AG04449 (cell line): ENCODE measurements at regions of chr15 and their contacts with region 1.

Region 1: GRCh38 chr15:40893733-40894688 is at the start of gene VPS18:
- DNase-seq: peak; percentile 71
- H3K4me3 ChIP-seq: peak within 1 kb of the TSS; percentile 95
- CTCF ChIP-seq: peak; percentile 90

Region 2: DNA sequence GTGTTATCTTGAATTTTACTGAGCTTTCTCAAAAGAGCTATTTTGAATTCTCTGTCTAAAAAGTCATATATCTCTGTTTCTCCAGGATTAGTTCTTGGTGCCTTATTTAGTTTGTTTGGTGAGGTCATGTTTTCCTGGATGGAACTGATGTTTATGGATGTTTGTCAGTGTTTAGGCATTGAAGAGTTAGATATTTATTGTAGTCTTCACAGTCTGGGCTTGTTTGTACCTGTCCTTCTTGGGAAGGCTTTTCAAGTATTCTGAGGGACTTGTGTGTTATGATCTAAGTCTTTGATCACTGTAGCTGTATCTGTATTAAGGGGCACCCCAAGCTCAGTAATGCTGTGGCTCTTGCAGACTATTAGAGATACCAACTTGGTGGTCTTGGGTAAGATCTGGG is 209.6 kb before region 1 on chr15:
- CTCF ChIA-PET with region 1: interaction called, 14 read pairs
- POLR2A ChIA-PET with region 1: no interaction called
- DNase-seq: no peak
- H3K4me3 ChIP-seq: no peak overlapping the region
- CTCF ChIP-seq: no peak

Region 3: DNA sequence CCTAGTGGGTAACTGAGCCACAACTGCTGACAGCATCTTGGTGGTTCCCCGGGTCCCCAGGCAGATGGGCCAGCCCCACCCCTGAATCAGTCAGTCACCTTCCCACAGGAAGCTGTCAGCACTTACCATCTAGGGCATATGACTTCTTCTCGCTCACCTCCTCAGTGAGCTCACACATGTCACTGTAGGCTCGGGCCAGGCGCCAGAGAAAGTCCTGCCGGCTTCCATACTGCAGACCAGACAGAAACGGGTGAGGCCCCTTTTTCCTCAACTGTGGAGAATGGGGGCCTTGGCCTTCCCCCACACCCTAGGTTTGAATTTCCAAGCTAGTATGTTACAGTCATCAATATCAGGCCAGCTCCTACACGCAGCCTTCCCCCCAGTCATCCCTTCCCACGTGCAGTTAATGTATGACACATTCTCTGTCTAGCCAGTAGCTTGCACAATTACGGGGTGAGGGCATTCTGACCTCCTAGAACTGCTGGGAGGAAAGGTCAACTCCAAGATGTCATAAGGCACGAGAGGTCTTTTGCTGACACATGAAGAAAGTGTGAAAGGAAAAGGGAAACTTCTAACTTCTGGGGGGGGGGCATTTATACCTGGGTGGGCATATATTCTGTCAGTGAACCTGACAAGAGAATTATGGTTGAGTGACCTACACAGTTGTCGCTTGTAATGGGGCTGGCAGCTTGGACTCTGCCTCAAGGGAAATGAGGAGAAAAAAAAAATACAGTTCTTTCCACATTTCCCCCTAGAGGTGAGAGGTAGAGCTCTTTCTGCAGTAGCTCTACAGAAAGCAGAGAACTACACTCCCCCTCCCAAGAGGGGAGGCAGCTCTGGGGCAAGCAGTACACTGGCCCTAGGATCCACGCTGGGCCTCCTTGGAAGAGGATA is 149.8 kb before region 1 on chr15:
- CTCF ChIA-PET with region 1: interaction called, 37 read pairs
- POLR2A ChIA-PET with region 1: no interaction called
- DNase-seq: no peak
- H3K4me3 ChIP-seq: no peak overlapping the region
- CTCF ChIP-seq: no peak

Region 4: DNA sequence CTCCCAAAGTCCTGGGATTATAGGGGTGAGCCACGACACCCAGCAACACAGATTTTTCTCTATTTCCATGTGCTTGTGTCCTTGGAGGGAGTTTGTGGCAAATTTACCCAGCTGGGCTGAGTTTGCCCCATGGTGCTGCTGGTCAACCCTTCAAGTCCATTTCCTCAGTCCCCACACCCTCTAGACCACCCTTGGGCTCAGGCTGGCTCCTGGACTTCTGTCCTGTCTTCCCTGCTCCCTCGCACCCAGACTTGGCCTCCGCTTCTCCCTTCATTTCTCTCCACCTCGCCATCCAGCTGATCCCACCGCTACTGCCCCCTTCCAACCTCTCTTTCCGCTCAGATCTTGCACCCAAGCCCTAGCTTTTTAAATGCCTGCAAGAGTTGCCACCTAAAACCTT is 12.7 kb before region 1 on chr15:
- CTCF ChIA-PET with region 1: interaction called, 42 read pairs
- POLR2A ChIA-PET with region 1: interaction called, 3 read pairs
- DNase-seq: no peak
- H3K4me3 ChIP-seq: no peak overlapping the region
- CTCF ChIP-seq: no peak

Region 5: DNA sequence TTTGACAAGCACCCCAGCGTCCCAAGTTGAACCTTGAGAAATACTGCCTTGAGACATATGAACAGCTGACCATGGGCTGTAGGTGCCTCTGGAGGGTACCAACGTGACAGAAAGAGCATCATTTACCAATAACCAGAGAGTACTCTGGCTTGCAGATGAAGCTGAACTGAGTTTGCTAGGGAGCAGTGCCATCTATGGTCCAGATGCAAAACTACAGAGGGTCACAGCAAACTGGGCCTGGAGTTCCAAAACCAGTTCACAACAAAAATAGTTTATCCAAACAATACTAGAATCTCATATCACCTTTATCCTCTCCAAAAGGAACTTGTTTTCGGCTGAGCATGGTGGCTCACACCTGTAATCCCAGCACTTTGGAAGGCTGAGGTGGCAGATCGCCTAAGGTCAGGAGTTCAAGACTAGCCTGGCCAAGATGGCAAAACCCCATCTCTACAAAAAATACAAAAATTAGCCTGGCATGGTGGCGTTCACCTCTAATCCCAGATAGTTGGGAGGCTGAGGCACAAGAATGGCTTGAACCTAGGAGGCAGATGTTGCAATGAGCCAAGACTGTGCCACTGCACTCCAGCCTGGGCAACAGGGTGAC is 128.6 kb after region 1 on chr15:
- CTCF ChIA-PET with region 1: interaction called, 498 read pairs
- POLR2A ChIA-PET with region 1: interaction called, 3 read pairs
- DNase-seq: peak; percentile 16
- H3K4me3 ChIP-seq: no peak overlapping the region
- CTCF ChIP-seq: peak; percentile 77

Region 6: DNA sequence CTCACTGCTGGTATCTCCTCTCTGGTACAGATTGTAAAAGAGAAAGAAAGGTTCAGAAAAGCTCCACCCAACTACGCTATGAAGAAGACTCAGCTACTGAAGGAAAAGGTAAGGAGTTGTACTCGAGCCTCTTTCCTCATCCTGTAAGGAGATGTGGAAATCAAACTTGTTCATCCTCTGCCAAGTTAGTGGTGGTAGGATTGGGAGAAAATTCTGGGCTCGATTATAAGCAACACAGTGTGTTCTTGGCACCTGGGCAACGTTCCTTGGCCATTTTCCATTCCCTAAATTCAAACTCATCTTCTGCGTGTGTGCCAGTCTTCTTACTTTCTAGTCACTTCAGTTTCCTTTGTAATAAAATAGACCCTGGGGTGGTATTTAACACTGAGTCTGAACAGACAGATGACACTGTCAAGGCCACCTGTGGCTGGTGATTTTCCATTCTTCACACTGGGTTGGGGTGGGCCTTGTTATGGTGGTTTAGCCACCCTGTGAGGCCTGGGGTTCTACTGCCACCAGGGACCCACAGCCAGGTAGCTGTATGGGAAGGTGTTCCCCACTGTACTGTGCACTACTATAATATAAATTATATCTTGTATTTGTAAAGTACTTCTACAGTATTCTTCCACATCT is 582.5 kb after region 1 on chr15:
- CTCF ChIA-PET with region 1: no interaction called
- POLR2A ChIA-PET with region 1: no interaction called
- DNase-seq: no peak
- H3K4me3 ChIP-seq: no peak overlapping the region
- CTCF ChIP-seq: no peak